ENCODE measurements at regions of chr9 and their contacts with region 1.

Region 1: GRCh38 chr9:70438341-70438928 is 24.0 kb upstream of the KLF9 start:
- DNase-seq: peak in 1 of 2 donors; percentile 88
- H3K4me3 ChIP-seq: no peak overlapping the region
- H3K27ac ChIP-seq: peak overlapping the region; percentile 23 to 53
- H3K4me1 ChIP-seq: peaks cover 5 to 11% of the 10 kb centered on the region in 2 donors
- H3K27me3 ChIP-seq: no peaks in the 10 kb centered on the region
- CTCF ChIP-seq: no peak

Region 2: DNA sequence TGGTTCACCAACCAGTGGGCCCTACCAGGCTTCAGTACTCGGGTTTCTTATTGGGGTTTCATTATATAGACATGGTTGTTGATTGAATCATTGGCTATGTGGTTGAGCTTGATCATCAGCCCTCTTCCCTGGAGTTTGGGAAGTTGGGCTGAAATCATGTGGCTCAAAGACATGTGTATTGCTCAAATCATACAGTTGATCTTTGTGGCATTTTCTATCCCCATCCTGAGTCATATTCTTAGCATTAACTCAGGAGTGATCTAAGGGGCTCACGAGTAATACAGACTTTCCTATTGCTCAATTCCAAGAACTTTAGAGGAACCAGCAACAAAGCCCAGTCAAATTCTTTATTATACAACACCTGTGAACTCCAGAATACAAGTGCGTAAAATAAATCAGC is 113.5 kb before region 1 on chr9:
- intact Hi-C with region 1: no loop called
- DNase-seq: no peak
- H3K4me3 ChIP-seq: no peak overlapping the region
- H3K27ac ChIP-seq: no peak overlapping the region
- H3K4me1 ChIP-seq: no peaks in the 10 kb centered on the region
- H3K27me3 ChIP-seq: no peaks in the 10 kb centered on the region
- CTCF ChIP-seq: no peak

Region 3: DNA sequence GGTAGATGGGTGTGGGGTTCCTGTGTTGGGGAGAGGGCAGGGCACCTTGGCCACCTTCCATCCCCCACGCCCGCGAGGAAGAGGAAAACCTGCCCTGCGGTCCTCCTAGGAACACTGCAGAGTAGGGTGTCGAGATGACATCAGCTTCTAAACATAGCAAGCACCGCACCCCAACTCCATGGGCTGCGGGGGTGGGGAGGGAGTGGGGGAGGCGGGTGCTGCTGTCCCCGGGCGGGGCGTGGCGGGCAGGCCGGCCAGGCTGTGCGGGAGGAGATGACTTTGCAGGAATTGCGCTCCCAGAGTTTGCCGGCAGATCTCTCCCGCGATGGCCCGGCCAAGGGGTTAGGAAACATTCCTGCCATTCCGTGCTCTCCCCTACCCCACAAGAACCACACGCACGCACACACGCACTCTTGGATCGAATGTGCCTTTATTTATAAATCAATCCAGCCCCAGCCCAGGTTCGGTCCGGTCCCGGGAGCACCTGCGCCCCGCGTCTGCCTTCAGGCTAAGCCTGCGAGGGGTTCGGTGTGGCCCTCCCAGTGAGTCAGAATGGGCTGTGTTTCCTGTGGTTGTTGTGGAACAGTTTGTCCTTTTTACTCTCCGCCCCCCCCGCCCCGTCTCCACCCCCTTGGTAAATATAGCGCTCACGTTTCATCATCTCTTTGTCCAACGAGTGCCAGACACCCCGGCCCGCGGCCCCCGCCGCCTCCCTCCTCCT is 18.7 kb before region 1 on chr9:
- intact Hi-C with region 1: loop called (anchors 1 kb)
- DNase-seq: peak; percentile 93 to 98
- H3K4me3 ChIP-seq: peak overlapping the region; percentile 54 to 75
- H3K27ac ChIP-seq: peak overlapping the region; percentile 100
- H3K4me1 ChIP-seq: peaks cover 14 to 43% of the 10 kb centered on the region in 2 donors
- H3K27me3 ChIP-seq: no peaks in the 10 kb centered on the region
- CTCF ChIP-seq: peak in 2 of 3 experiments; percentile 9 to 17

Region 4: GRCh38 chr9:70466976-70467561 is 28.6 kb after region 1 on chr9:
- intact Hi-C with region 1: no loop called
- DNase-seq: peak in 1 of 2 donors; percentile 66
- H3K4me3 ChIP-seq: no peak overlapping the region
- H3K27ac ChIP-seq: no peak overlapping the region
- H3K4me1 ChIP-seq: peaks cover 5 to 11% of the 10 kb centered on the region in 2 donors
- H3K27me3 ChIP-seq: no peaks in the 10 kb centered on the region
- CTCF ChIP-seq: no peak